ENCODE measurements at regions of chr5 and their contacts with region 1.

Region 1: DNA sequence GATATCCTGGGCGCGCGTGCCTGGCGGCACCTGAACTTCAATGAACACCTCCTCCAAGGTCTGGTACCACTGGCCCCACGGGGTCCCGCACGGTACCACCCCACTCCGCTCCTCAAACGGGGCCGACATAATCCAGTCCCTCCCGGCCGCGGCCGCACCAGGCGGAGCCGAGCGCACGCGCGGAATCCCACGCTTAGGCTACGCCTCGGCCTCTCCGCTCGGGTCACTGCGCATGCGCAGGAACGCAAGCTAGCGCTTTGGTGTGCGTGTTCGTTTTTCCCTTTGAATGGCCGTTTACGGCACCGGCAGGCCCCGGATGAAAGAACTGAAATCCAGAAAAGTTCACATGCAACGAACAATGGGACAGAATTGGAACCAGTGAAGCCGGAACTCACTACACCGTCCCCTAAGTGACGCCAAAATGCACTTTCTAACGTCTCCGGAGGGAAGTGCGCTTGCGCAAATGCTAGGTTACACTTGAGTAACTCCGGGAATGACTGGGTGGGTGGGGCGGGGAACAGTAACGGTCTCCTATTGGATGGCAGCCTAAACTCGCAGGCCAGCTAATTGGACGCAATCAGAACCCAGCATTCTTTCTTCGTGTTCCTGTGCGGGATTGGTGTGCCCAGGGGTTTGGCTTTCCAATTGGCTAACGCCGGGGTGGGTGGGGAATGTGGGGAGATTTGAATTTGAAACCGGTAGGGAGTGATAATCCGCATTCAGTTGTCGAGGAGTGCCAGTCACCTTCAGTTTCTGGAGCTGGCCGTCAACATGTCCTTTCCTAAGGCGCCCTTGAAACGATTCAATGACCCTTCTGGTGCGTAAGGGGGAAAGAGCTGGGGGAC is at the starts of genes HMMR and NUDCD2:
- DNase-seq: peak; percentile 97
- ATAC-seq: peak; percentile 89
- H3K4me3 ChIP-seq: peak within 1 kb of the TSS; percentile 79 to 88
- H3K27ac ChIP-seq: peak within 1 kb of the TSS; percentile 87
- H3K4me1 ChIP-seq: peaks cover 7 to 25% of the 10 kb centered on the region in 2 experiments; a peak in 3 of 4 replicates
- H3K27me3 ChIP-seq: no peaks in the 10 kb centered on the region
- CTCF ChIP-seq: no peak
- POLR2A ChIP-seq: peak; percentile 80
- RAD21 ChIP-seq: no peak
- total RNA-seq, gene HMMR: 54.9 TPM
- total RNA-seq, gene NUDCD2: 56.8 TPM

Region 2: GRCh38 chr5:163437309-163438182 is 22.6 kb before region 1 on chr5 and contains the start of gene CCNG1:
- CTCF ChIA-PET with region 1: interaction called, 5 read pairs
- POLR2A ChIA-PET with region 1: interaction called, 34 read pairs
- RAD21 ChIA-PET with region 1: no interaction called
- intact Hi-C with region 1: no loop called
- DNase-seq: peak; percentile 92
- ATAC-seq: peak; percentile 95
- H3K4me3 ChIP-seq: peak within 1 kb of the TSS; percentile 72 to 87
- H3K27ac ChIP-seq: peak within 1 kb of the TSS; percentile 88
- H3K4me1 ChIP-seq: peaks cover 0 to 14% of the 10 kb centered on the region in 2 experiments; a peak in 3 of 4 replicates
- H3K27me3 ChIP-seq: no peaks in the 10 kb centered on the region
- CTCF ChIP-seq: no peak
- POLR2A ChIP-seq: no peak
- RAD21 ChIP-seq: no peak
- total RNA-seq, gene CCNG1: 176 TPM